ENCODE measurements at regions of chr13 and their contacts with region 1.

Region 1: DNA sequence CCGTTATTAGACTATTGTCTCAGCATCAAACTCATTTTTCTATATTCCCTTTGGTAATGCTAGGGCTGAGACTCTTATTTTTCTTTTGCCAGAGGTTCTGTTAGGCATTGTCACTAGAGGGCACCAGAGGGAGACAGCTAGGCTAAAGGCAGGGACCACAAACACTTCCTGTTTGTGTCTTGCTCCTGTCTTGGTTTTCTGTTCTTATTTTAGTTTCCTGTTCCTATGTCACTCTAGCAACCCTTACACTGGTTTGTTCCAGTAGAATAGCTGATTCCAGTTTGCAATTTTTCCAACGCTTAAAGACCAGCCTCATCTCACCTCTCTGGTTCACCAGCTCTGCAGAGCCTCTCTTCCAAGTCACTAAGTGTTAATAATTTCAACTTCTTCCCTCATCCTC is 772.0 kb downstream of the DIAPH3 start:
- DNase-seq: peak in 3 of 6 donors; percentile 61 to 75 (median 70)
- ATAC-seq: peak; percentile 88 to 99 (median 98)
- H3K4me3 ChIP-seq: no peak overlapping the region
- H3K27ac ChIP-seq: peak overlapping the region in 1 of 4 donors; percentile 36
- H3K4me1 ChIP-seq: peaks cover 0 to 9% (median 0%) of the 10 kb centered on the region in 3 donors
- H3K27me3 ChIP-seq: no peaks in the 10 kb centered on the region
- CTCF ChIP-seq: peak; percentile 49 to 86 (median 82)

Region 2: DNA sequence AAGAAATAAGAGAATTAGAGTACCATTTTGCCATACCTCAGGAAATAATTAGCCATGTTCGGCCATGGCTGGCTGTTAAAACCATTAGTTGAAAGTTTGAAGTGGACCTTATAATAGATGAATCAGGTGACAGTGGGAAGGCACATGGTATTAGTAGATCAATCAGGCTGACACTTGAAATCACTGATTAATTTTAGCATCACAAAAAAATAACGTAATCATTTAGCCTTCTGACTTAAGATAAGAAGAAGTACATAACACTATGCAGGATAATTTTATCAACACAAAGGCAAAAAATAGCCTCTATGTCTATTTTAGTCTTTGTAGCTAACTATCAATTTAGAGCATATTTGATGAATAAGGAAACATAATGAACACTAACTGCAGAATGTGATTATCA is 1144.6 kb before region 1 on chr13:
- intact Hi-C with region 1: no loop called
- DNase-seq: no peak
- ATAC-seq: no peak
- H3K4me3 ChIP-seq: no peak overlapping the region
- H3K27ac ChIP-seq: no peak overlapping the region
- H3K4me1 ChIP-seq: no peaks in the 10 kb centered on the region
- H3K27me3 ChIP-seq: no peaks in the 10 kb centered on the region
- CTCF ChIP-seq: no peak

Region 3: DNA sequence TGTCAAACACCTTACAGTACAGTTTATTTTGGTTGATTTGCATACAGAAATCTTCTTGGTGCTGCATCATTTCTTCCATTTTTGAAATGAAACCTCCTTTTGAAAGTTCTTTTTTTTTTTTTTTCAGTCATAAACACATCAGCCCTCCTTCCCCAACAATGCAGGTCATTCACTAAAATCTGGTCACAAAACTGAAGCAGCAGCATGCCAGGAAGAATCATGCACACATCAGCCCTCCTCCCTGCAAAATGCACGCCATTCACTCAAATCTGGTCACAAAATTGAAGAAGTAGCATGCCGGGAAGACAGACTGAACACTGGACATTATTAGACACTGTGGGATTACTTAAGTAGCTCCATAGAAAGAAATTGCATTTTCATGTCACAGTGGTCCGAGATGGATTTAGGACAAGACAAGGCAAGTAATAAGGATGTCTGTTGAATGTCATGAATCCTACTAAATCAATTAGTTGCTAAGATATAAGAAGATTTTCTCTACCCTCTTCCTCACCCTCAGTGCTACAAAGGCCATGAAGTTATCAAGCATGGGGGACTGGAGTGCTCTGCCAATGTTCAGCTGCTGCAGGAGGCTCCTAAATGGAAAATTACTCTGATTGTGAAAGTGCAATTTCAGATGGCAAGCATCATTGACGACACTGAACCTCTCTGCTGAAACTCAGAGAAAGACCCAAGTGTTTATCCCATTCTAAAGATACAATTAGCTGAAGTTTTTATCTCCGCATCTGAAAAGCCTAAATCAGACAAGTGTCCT is 141.2 kb before region 1 on chr13:
- intact Hi-C with region 1: no loop called
- DNase-seq: no peak
- ATAC-seq: no peak
- H3K4me3 ChIP-seq: no peak overlapping the region
- H3K27ac ChIP-seq: no peak overlapping the region
- H3K4me1 ChIP-seq: no peaks in the 10 kb centered on the region
- H3K27me3 ChIP-seq: no peaks in the 10 kb centered on the region
- CTCF ChIP-seq: no peak

Region 4: GRCh38 chr13:59547950-59548349 is 156.3 kb after region 1 on chr13:
- intact Hi-C with region 1: no loop called
- DNase-seq: no peak
- ATAC-seq: no peak
- H3K4me3 ChIP-seq: no peak overlapping the region
- H3K27ac ChIP-seq: no peak overlapping the region
- H3K4me1 ChIP-seq: no peaks in the 10 kb centered on the region
- H3K27me3 ChIP-seq: no peaks in the 10 kb centered on the region
- CTCF ChIP-seq: no peak

Region 5: DNA sequence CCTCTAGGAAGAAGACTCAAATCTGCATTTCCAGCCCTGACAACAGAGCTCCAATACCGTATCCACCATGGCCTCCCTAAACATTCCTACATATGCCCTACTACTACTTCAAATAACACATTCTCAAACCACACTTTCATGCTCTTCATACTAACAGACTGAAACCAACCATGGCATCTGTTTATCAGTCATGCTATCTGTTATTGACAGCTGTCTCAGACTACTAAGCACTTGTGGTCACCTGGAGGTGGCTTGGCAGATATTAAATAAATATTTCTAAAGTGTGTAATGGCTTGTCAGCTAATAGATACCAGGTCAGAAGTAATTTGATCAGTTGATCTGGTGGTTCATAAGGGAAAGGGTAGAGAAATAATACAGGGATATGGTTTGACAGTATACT is 282.9 kb after region 1 on chr13:
- intact Hi-C with region 1: loop called in 1 of 3 experiments (anchors 5 kb)
- DNase-seq: no peak
- ATAC-seq: no peak
- H3K4me3 ChIP-seq: no peak overlapping the region
- H3K27ac ChIP-seq: no peak overlapping the region
- H3K4me1 ChIP-seq: peaks cover 0 to 6% (median 0%) of the 10 kb centered on the region in 3 donors
- H3K27me3 ChIP-seq: no peaks in the 10 kb centered on the region
- CTCF ChIP-seq: no peak

Measured in pancreas (tissue), 10 donors.